Pancreas (tissue), 10 donors: ENCODE measurements at regions of chr14 and their contacts with region 1.

Region 1: DNA sequence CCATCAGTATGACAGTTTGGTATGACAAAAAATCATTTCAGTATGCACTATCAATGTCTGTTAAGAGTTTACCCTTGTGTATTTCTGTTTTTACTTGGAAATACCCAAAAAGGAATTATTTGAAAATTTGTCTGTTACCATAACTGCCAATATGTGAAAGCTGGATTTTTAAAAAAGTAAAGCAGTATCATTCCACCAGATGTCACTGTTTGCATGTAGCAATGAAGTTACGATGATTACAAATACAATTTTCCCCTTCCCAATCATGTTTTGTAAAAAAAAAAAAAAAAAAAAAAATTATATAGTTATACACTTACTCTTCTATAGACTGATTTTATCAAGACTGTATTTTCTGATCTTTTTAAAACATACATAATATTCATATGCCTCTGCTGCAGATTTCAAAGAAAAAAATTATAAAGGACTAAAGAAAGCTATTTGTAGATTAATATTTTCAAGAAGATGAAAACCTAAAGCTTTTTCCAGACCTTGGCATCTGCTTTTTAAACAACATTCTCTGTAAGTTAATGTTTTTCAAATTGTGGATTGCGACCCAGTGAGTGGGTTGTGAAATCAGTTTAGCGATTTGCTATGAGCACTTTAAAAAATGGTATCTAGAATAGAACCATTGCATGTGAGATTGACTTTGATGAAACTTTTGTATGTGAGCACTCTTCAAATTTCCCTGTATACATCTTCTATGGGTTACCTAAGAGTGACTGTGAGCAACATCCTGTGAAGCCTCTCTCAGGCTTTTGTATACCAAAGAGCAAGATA is 114.2 kb downstream of the TTC6 start:
- DNase-seq: no peak
- ATAC-seq: no peak
- H3K4me3 ChIP-seq: no peak overlapping the region
- H3K27ac ChIP-seq: no peak overlapping the region
- H3K4me1 ChIP-seq: no peaks in the 10 kb centered on the region
- H3K27me3 ChIP-seq: no peaks in the 10 kb centered on the region
- CTCF ChIP-seq: no peak

Region 2: DNA sequence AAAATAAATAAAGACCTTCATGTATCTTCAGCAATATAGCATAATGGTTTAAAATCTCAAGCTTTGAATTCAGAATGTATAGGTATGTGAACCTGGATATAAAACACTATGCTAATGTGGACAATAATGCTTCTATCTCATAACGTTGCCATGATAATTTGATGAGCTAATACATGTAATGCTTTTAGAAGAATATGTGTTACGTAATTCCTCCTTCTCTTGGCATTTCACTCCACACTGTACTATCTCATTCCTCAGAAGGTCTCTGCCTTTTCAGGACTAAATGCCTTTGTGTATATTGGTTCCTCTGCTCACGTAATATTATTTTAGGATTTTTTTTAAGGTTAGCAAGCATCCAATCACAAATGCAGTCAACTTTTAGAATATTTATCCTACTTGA is 201.1 kb before region 1 on chr14:
- intact Hi-C with region 1: no loop called
- DNase-seq: no peak
- ATAC-seq: no peak
- H3K4me3 ChIP-seq: no peak overlapping the region
- H3K27ac ChIP-seq: no peak overlapping the region
- H3K4me1 ChIP-seq: no peaks in the 10 kb centered on the region
- H3K27me3 ChIP-seq: no peaks in the 10 kb centered on the region
- CTCF ChIP-seq: no peak

Region 3: DNA sequence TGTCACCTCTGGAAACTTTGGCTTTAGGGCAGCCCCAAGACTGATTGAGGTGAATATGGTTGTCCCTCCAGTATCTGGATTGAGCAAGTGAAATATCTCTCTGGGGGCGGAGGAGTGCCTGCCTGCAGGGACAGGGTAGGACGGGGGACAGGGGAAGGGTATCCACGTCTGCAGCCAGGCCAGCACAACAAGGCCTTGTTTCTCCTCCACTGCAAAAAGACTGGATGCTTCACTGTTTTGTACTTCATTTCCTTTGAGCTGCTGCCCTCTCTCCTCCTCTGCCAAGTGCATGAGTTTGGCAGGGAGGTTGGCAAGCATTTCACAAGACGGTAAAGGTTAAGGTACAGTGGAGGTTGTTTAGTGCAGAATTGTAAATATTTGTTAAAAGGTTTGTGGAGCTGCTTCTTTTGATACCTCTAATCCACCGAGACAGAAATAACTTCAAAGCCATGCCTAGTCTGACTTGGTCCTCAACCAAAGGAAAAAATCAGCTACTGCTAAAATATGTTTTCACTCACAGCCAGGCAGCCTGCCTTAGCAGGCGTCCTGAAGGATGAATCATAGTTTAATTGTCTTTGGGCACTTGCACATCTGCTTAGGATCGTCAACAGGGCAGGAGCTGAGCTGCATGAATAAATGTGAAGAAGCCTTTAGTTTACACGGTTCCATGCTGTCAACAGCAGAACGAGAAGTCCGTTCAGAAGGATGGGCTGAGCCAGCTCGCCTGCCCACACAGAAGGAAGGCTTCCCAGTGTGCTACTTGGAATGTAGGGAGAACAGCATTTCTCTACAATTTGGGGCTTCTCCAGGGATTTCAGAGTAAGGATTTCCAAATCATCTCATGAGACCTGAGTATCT is 155.5 kb after region 1 on chr14:
- intact Hi-C with region 1: loop called in 2 of 3 experiments (anchors 10 kb)
- DNase-seq: no peak
- ATAC-seq: peak in 2 of 4 donors; percentile 30 to 78
- H3K4me3 ChIP-seq: no peak overlapping the region
- H3K27ac ChIP-seq: no peak overlapping the region
- H3K4me1 ChIP-seq: no peaks in the 10 kb centered on the region
- H3K27me3 ChIP-seq: no peaks in the 10 kb centered on the region
- CTCF ChIP-seq: no peak

Region 4: GRCh38 chr14:37874429-37875191 is 165.0 kb after region 1 on chr14:
- intact Hi-C with region 1: loop called in 2 of 3 experiments (anchors 10 kb)
- DNase-seq: peak; percentile 59 to 98 (median 86)
- ATAC-seq: peak; percentile 94 to 100 (median 99)
- H3K4me3 ChIP-seq: no peak overlapping the region
- H3K27ac ChIP-seq: no peak overlapping the region
- H3K4me1 ChIP-seq: no peaks in the 10 kb centered on the region
- H3K27me3 ChIP-seq: no peaks in the 10 kb centered on the region
- CTCF ChIP-seq: peak; percentile 73 to 89 (median 86)